ENCODE measurements at regions of chr15 and their contacts with region 1.

Region 1: DNA sequence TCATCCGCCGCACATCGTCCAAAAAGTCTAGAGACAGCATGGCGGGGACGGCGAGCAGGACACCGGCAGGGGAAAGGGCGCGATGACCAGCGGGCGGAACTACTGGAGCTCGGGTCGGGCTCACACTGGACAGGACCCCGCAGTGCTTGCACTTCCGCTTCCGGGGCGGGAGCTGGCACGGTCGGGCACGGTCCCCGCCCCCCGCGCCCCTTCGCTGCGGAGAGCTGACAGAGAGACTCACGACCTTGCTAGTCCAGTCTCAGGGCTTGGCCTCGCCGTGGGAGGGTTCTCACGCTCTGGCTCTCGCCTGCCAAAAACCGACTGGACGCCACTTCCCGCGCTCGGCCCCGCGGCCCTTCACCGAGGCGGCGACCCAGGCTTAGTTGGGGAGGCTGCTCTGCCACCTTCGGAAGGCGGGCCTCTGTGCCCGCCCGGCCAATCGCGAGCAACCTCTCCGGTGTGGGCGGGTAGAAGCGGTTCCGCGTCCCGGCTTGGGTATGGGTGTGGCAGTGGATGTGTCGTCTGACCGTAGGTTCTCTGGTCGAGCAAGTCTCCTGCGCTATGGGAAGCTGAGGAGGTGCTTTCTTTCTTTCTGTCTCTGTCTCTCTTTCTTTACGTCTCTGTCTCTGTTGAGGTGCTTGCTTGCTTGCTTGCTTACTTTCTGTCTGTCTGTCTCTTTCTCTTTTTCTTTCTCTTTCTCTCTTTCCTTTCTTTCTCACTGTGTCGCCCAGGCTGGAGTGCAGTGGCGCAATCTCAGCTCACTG is at the start of gene SEC11A:
- DNase-seq: peak; percentile 94
- ATAC-seq: peak; percentile 89
- H3K4me3 Mint-ChIP-seq: peak within 1 kb of the TSS; percentile 98
- H3K27ac Mint-ChIP-seq: peak within 1 kb of the TSS; percentile 97
- H3K4me1 Mint-ChIP-seq: peaks cover 55% of the 10 kb centered on the region
- H3K27me3 Mint-ChIP-seq: no peaks in the 10 kb centered on the region
- total RNA-seq, gene SEC11A: 66.6 to 111 TPM

Region 2: GRCh38 chr15:84633311-84634227 is 82.6 kb before region 1 on chr15:
- CTCF ChIA-PET with region 1: interaction called, 3 read pairs
- POLR2A ChIA-PET with region 1: interaction called, 3 read pairs
- intact Hi-C with region 1: loop called (anchors 1 kb)
- DNase-seq: peak; percentile 87
- ATAC-seq: peak; percentile 57
- H3K4me3 Mint-ChIP-seq: peak overlapping the region; percentile 93
- H3K27ac Mint-ChIP-seq: peak overlapping the region; percentile 99
- H3K4me1 Mint-ChIP-seq: peaks cover 45% of the 10 kb centered on the region
- H3K27me3 Mint-ChIP-seq: no peaks in the 10 kb centered on the region

Region 3: GRCh38 chr15:84669726-84670125 is 46.5 kb before region 1 on chr15:
- CTCF ChIA-PET with region 1: interaction called, 3 read pairs
- POLR2A ChIA-PET with region 1: interaction called, 3 read pairs
- intact Hi-C with region 1: loop called in 1 of 2 experiments (anchors 2 kb)
- DNase-seq: peak; percentile 77
- ATAC-seq: peak; percentile 27
- H3K4me3 Mint-ChIP-seq: no peak overlapping the region
- H3K27ac Mint-ChIP-seq: peak overlapping the region; percentile 64
- H3K4me1 Mint-ChIP-seq: peaks cover 56% of the 10 kb centered on the region
- H3K27me3 Mint-ChIP-seq: no peaks in the 10 kb centered on the region

Region 4: DNA sequence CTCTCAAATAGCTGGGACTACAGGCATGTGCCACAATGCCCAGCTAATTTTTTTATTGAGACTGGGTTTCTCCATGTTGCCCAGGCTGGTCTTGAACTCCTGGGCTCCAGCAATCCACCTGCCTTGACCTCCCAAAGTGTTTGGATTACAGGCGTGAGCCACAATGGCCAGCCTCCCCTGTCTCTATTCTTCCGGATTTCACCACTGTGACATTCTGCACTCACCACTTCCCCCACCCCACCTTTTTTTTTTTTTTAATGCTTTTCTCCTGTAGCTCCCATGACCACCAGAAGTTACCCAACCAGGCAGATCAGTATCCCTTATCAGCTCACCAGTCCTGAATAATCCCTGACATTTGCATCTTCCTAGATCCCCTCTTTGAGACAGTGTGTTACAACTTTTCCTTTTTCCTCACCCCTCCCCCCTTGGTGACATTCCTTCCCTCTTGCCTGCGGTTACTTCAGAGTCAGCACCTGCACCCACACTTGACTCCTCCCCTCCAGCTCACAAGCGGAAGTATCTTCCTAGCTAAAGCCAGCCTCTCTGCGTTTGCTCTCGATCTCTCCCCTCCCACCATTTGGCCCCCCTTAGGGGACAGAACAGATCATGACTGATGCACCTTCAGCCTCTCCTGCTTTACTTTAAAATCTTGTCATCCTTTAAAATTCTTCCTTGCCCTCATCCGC is 18.7 kb after region 1 on chr15:
- CTCF ChIA-PET with region 1: interaction called, 46 read pairs
- POLR2A ChIA-PET with region 1: interaction called, 37 read pairs
- intact Hi-C with region 1: loop called (anchors 1 kb)
- DNase-seq: peak; percentile 87
- ATAC-seq: peak; percentile 72
- H3K4me3 Mint-ChIP-seq: peak overlapping the region; percentile 59
- H3K27ac Mint-ChIP-seq: peak overlapping the region; percentile 97
- H3K4me1 Mint-ChIP-seq: peaks cover 63% of the 10 kb centered on the region
- H3K27me3 Mint-ChIP-seq: no peaks in the 10 kb centered on the region

Region 5: DNA sequence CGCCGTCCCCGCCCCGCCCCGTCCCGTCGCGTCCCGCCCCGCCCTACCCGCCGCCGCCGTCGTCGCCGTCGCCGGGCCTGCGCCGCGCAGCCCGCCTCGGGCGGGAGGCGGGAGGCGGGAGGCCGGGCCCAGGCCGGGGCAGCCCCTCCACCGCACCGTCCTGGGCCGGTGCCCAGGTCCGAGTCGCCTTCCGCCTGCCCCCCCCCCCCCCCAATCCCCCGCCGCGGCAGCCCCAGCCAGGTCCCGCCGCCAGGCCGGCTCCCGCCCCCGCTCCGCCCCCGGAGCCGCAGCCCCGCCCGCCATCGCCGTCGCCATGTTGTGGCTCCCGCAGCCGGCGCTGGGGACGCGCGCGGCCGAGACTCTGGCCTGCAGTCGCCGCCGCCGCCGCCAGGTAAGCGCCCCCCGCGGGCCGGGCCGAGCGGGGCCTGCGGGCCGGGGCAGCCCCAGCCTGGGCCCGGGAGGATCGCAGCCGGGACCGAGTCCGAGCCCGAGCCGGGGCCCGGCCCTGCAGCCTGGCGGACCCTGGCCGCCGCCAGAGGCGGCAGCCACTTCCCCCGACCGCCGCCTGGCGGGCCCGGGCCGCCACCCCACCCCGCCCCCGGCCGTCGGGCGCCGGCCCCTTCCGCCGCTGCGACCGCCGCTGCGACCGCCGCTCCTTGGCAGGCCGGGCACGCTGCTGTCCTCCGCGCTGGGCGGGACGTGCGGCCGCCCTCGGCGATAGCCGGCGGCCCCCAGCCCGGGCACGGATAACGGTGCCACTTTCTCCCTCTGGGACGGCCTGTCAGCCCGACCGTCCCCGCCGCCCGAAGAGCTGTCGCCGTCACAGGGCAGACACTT is 32.3 kb after region 1 on chr15 and contains the start of gene ZNF592:
- CTCF ChIA-PET with region 1: interaction called, 8 read pairs
- POLR2A ChIA-PET with region 1: interaction called, 4 read pairs
- intact Hi-C with region 1: loop called (anchors 1 kb)
- DNase-seq: peak; percentile 86
- ATAC-seq: peak; percentile 55
- H3K4me3 Mint-ChIP-seq: peak within 1 kb of the TSS; percentile 94
- H3K27ac Mint-ChIP-seq: peak within 1 kb of the TSS; percentile 97
- H3K4me1 Mint-ChIP-seq: peaks cover 59% of the 10 kb centered on the region
- H3K27me3 Mint-ChIP-seq: no peaks in the 10 kb centered on the region
- total RNA-seq, gene ZNF592: 25.5 to 30.8 TPM

Region 6: DNA sequence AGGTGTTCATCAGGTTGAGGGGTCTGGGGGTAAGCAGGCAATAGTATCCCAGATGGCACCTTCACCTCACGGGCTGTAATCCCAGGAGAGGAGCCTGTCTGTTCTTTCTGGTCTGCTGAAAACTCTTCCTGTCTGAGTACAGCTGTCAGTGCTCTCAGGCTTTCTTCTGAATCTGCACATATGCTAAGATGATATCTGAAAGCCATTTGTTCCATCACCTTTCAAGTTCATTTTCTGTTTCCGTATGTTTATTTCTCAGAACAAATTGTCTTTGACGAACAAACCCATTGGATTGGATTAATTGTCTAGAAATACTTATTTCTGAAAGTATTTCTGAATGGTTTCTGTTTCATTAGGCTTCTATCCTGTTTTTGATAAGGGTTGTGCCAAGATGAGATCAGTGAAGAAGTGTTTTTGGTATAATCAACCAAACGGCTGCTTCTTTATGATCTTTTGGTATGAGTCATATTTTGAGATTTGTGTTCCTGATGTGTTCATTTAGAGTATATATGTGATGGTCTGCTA is 45.5 kb after region 1 on chr15:
- CTCF ChIA-PET with region 1: no interaction called
- POLR2A ChIA-PET with region 1: interaction called, 4 read pairs
- intact Hi-C with region 1: loop called (anchors 1 to 5 kb)
- DNase-seq: peak; percentile 28
- ATAC-seq: peak; percentile 83
- H3K4me3 Mint-ChIP-seq: no peak overlapping the region
- H3K27ac Mint-ChIP-seq: no peak overlapping the region
- H3K4me1 Mint-ChIP-seq: peaks cover 14% of the 10 kb centered on the region
- H3K27me3 Mint-ChIP-seq: no peaks in the 10 kb centered on the region